ENCODE measurements at regions of chr1 and their contacts with region 1.

Region 1: DNA sequence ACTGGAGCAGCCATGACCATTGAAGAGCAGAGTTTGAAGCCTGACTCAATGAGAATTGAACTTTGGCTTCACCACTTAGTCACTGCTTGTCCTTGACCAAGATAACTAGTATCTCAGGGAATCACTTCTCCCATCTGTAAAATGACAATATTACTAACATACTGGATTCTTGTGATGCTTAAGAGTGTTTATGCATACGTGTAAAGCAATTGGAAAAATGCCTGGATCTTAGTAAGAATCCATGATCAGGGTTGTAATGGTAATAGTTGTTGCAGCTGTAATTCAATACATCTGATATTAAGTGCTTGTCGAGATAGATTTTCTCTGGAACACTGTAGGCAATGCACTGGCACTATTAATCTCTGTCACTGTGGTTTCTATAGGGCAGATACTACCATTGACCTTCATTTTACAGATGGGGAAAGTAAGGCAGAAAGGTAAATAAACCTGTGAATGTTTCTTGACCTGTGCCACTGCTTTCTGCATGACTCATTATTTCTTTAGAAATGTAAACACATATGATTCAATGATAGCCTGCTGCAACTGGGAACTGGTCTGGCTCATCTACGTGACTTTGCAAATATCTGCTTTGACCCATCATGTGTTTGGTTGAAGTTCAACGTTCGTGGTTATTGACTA is 662.5 kb downstream of the PLA2G4A start:
- DNase-seq: peak; percentile 98
- ATAC-seq: peak; percentile 88
- H3K4me3 ChIP-seq: no peak overlapping the region
- H3K27ac ChIP-seq: peak overlapping the region; percentile 83; the same call in 1 of the 2 replicates
- H3K4me1 ChIP-seq: peaks cover 3% of the 10 kb centered on the region
- H3K27me3 ChIP-seq: no peaks in the 10 kb centered on the region
- CTCF ChIP-seq: no peak
- POLR2A ChIP-seq: no peak
- RAD21 ChIP-seq: no peak

Region 2: DNA sequence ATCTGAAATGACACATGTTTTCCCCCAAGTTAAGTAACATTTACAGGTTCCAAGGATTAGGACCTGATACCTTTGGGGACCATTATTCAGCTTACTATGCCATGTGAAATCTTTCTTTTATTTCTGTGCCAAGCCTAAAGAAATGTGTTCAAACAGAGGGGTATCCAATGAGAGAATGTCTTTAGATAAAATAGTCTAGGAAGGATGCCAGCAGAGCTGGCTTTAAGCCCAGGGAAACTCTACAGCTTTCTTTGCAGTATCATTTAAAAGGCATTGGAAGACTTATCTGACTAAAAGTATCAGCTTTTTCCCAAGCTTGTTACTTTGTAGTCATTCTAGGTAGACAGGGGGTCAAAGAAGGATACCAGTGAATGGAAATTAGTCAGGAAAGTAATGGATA is 197.9 kb after region 1 on chr1:
- CTCF ChIA-PET with region 1: no interaction called
- POLR2A ChIA-PET with region 1: no interaction called
- dilution Hi-C with region 1: no loop called
- in situ Hi-C with region 1: no loop called
- intact Hi-C with region 1: loop called (anchors 5 kb)
- DNase-seq: peak; percentile 90
- ATAC-seq: peak; percentile 45
- H3K4me3 ChIP-seq: no peak overlapping the region
- H3K27ac ChIP-seq: no peak overlapping the region
- H3K4me1 ChIP-seq: peaks cover 2% of the 10 kb centered on the region; the same call in 1 of the 2 replicates
- H3K27me3 ChIP-seq: no peaks in the 10 kb centered on the region
- CTCF ChIP-seq: no peak
- POLR2A ChIP-seq: no peak
- RAD21 ChIP-seq: no peak

Measured in IMR-90 (cell line).